ENCODE measurements at regions of chr12 and their contacts with region 1.

Region 1: GRCh38 chr12:49967042-49967776 is 5.5 kb downstream of the AQP5 start:
- DNase-seq: peak; percentile 82
- ATAC-seq: peak; percentile 62
- H3K4me3 ChIP-seq: peak overlapping the region; percentile 65
- H3K27ac ChIP-seq: no peak overlapping the region
- H3K4me1 ChIP-seq: peaks cover 18% of the 10 kb centered on the region
- H3K27me3 ChIP-seq: no peaks in the 10 kb centered on the region
- CTCF ChIP-seq: peak; percentile 81

Region 2: GRCh38 chr12:49866859-49867579 is 100.2 kb before region 1 on chr12:
- CTCF ChIA-PET with region 1: interaction called, 5 read pairs
- POLR2A ChIA-PET with region 1: no interaction called
- intact Hi-C with region 1: loop called (anchors 10 kb)
- DNase-seq: peak; percentile 87
- ATAC-seq: peak; percentile 84
- H3K4me3 ChIP-seq: no peak overlapping the region
- H3K27ac ChIP-seq: no peak overlapping the region
- H3K4me1 ChIP-seq: peaks cover 8% of the 10 kb centered on the region
- H3K27me3 ChIP-seq: no peaks in the 10 kb centered on the region
- CTCF ChIP-seq: peak; percentile 96

Measured in PC-3 (cell line).